Lower leg skin (tissue), 4 donors: ENCODE measurements at regions of chr12 and their contacts with region 1.

Region 1: GRCh38 chr12:62983599-62984022 is 48.7 kb upstream of the PPM1H start:
- DNase-seq: no peak
- H3K4me3 ChIP-seq: no peak overlapping the region
- CTCF ChIP-seq: no peak
- POLR2A ChIP-seq: no peak

Region 2: GRCh38 chr12:62919838-62920237 is 63.8 kb before region 1 on chr12:
- intact Hi-C with region 1: no loop called
- DNase-seq: no peak
- H3K4me3 ChIP-seq: no peak overlapping the region
- CTCF ChIP-seq: no peak
- POLR2A ChIP-seq: no peak

Region 3: DNA sequence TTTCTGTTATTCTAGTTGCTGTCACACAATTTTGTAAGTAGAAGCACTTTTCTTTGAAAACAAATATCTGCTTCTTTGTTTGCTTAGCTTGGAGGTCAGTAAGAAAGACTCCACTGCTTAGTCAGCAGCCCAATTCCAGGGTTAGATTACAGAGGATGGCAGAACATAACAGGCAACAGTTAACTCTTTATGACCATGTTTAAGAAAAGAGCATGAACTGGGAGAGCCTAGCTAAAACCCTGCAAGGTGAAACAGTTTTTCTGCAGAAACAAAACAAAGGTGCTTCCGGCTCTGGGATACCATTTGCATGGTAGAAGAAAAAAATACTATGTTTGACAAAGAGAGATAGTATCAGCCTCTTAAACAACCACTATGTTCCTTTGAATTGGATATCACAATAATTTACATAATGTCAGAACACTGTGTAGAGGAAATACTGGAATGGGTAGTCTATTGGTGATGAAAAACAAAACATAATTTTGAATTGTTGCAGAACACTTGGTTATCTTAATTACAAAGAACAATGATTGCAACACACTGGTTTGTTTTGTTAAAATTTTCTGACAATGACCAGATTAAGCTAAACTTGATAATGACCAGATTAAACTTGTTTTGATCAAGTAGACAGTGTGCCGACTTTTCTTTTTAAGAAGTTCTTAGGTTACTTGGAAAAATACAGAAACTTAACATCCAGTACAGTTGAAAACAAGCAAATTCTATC is 26.2 kb before region 1 on chr12:
- intact Hi-C with region 1: loop called (anchors 1 kb)
- DNase-seq: no peak
- H3K4me3 ChIP-seq: no peak overlapping the region
- CTCF ChIP-seq: no peak
- POLR2A ChIP-seq: no peak